Activated CD8-positive, alpha-beta T cell treated with anti-CD3 and anti-CD28 coated beads, Interleukin-2, amount 10 ng/mL, durations not matched to agents 7 days and 5 days (primary cell): ENCODE measurements at regions of chr12 and their contacts with region 1.

Region 1: GRCh38 chr12:53098982-53099651 is 1.6 kb downstream of the IGFBP6 start:
- DNase-seq: peak; percentile 94
- ATAC-seq: peak; percentile 25
- H3K4me3 Mint-ChIP-seq: peak overlapping the region; percentile 17
- H3K27ac Mint-ChIP-seq: peak overlapping the region; percentile 91
- H3K4me1 Mint-ChIP-seq: peaks cover 68% of the 10 kb centered on the region
- H3K27me3 Mint-ChIP-seq: peaks cover 8% of the 10 kb centered on the region

Region 2: DNA sequence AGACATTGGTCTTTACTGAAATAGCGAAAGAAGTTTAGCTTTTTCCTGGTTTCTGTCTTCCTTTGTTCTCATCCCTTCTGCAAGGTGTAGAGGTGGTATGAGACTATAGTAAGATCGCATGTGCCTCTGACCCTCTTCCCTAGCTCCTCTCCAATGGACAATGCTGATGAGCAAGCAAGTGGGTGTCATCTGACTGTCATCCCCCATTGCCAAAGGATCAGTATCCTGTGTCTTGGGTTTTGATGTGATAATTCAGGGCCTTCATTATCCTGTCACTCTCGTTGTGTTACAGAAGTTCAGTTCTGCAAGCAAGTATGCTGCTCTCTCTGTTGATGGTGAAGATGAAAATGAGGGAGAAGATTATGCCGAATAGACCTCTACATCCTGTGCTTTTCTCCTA is 59.3 kb before region 1 on chr12:
- CTCF ChIA-PET with region 1: interaction called, 11 read pairs
- POLR2A ChIA-PET with region 1: interaction called, 3 read pairs
- DNase-seq: no peak
- ATAC-seq: no peak
- H3K4me3 Mint-ChIP-seq: no peak overlapping the region
- H3K27ac Mint-ChIP-seq: peak overlapping the region; percentile 50
- H3K4me1 Mint-ChIP-seq: peaks cover 33% of the 10 kb centered on the region
- H3K27me3 Mint-ChIP-seq: no peaks in the 10 kb centered on the region

Region 3: GRCh38 chr12:53047221-53048042 is 51.7 kb before region 1 on chr12:
- CTCF ChIA-PET with region 1: interaction called, 21 read pairs
- POLR2A ChIA-PET with region 1: interaction called, 8 read pairs
- DNase-seq: peak; percentile 68
- ATAC-seq: peak; percentile 79
- H3K4me3 Mint-ChIP-seq: peak overlapping the region; percentile 25
- H3K27ac Mint-ChIP-seq: no peak overlapping the region
- H3K4me1 Mint-ChIP-seq: peaks cover 24% of the 10 kb centered on the region
- H3K27me3 Mint-ChIP-seq: peaks cover 6% of the 10 kb centered on the region

Region 4: GRCh38 chr12:53054112-53054833 is 44.8 kb before region 1 on chr12:
- CTCF ChIA-PET with region 1: interaction called, 24 read pairs
- POLR2A ChIA-PET with region 1: interaction called, 9 read pairs
- DNase-seq: peak; percentile 96
- ATAC-seq: peak; percentile 94
- H3K4me3 Mint-ChIP-seq: peak overlapping the region; percentile 94
- H3K27ac Mint-ChIP-seq: peak overlapping the region; percentile 94
- H3K4me1 Mint-ChIP-seq: peaks cover 17% of the 10 kb centered on the region
- H3K27me3 Mint-ChIP-seq: no peaks in the 10 kb centered on the region

Region 5: GRCh38 chr12:53079226-53080117 is 19.6 kb before region 1 on chr12 and contains the start of gene SPRYD3:
- CTCF ChIA-PET with region 1: interaction called, 170 read pairs
- POLR2A ChIA-PET with region 1: interaction called, 20 read pairs
- DNase-seq: peak; percentile 97
- ATAC-seq: peak; percentile 99
- H3K4me3 Mint-ChIP-seq: peak within 1 kb of the TSS; percentile 89
- H3K27ac Mint-ChIP-seq: peak within 1 kb of the TSS; percentile 93
- H3K4me1 Mint-ChIP-seq: peaks cover 28% of the 10 kb centered on the region
- H3K27me3 Mint-ChIP-seq: no peaks in the 10 kb centered on the region
- total RNA-seq, gene SPRYD3: 27.2 to 31.2 TPM

Region 6: GRCh38 chr12:53180220-53180930 is 81.3 kb after region 1 on chr12 and contains the starts of genes CSAD and ZNF740:
- CTCF ChIA-PET with region 1: interaction called, 10 read pairs
- POLR2A ChIA-PET with region 1: interaction called, 4 read pairs
- DNase-seq: peak; percentile 98
- ATAC-seq: peak; percentile 97
- H3K4me3 Mint-ChIP-seq: peak within 1 kb of the TSS; percentile 86
- H3K27ac Mint-ChIP-seq: peak within 1 kb of the TSS; percentile 98
- H3K4me1 Mint-ChIP-seq: peaks cover 50% of the 10 kb centered on the region
- H3K27me3 Mint-ChIP-seq: no peaks in the 10 kb centered on the region
- total RNA-seq, gene CSAD: 15.7 to 17.0 TPM
- total RNA-seq, gene ZNF740: 28.2 to 31.4 TPM